Mammary epithelial cell (primary cell): ENCODE measurements at regions of chr1 and their contacts with region 1.

Region 1: GRCh38 chr1:13662493-13662892 is 37.5 kb upstream of the PRDM2 start:
- DNase-seq: no peak
- H3K4me3 ChIP-seq: no peak overlapping the region
- H3K27ac ChIP-seq: no peak overlapping the region
- H3K4me1 ChIP-seq: peaks cover 3% of the 10 kb centered on the region
- H3K27me3 ChIP-seq: no peaks in the 10 kb centered on the region
- CTCF ChIP-seq: no peak

Region 2: GRCh38 chr1:13583966-13584791 is 78.3 kb before region 1 on chr1:
- CTCF ChIA-PET with region 1: no interaction called
- dilution Hi-C with region 1: no loop called
- in situ Hi-C with region 1: no loop called
- intact Hi-C with region 1: loop called (anchors 5 kb)
- DNase-seq: peak; percentile 29
- H3K4me3 ChIP-seq: peak overlapping the region; percentile 52 to 55 (median 53)
- H3K27ac ChIP-seq: peak overlapping the region; percentile 29
- H3K4me1 ChIP-seq: peaks cover 7% of the 10 kb centered on the region
- H3K27me3 ChIP-seq: no peaks in the 10 kb centered on the region
- CTCF ChIP-seq: no peak

Region 3: GRCh38 chr1:13725714-13726175 is 63.3 kb after region 1 on chr1:
- CTCF ChIA-PET with region 1: interaction called, 3 read pairs
- dilution Hi-C with region 1: no loop called
- in situ Hi-C with region 1: no loop called
- intact Hi-C with region 1: loop called (anchors 1 kb)
- DNase-seq: peak; percentile 34
- H3K4me3 ChIP-seq: no peak overlapping the region
- H3K27ac ChIP-seq: no peak overlapping the region
- H3K4me1 ChIP-seq: no peaks in the 10 kb centered on the region
- H3K27me3 ChIP-seq: no peaks in the 10 kb centered on the region
- CTCF ChIP-seq: peak; percentile 58 to 75

Region 4: DNA sequence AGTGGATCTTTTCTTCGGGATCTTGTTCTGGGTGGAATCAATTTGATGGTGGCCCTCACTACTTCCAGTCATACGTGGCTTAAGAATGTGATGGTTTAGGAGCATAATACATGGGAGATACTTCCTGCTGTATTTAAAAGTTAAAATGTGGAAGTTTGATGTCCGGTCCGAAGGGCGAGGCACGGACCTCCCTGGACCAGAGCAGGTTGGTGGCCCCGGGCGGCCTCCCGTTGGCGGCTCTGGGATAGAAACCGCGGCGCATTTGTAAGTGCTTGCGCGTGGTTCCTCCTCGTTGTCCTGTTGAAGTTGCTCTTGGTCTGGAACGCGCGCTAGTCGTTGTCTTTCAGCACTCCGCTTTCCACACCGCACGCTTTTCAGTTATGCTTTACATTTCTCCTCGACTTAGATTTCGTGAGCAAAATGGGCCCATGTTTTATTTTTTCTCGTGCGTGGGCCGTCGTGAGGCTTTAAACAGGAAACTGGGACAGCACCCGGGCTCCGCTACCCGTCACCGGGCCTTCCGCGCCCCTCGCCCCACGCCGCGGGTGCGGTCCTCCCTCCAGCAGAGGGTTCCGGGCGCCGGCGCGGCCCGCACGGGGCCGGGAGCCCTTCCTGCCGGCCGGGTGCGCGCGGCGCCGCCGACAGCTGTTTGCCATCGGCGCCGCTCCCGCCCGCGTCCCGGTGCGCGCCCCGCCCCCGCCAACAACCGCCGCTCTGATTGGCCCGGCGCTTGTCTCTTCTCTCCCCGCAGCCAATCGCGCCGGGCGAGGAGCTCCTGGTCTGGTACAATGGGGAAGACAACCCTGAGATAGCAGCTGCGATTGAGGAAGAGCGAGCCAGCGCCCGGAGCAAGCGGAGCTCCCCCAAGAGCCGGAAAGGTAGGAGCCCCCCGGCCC is 86.4 kb after region 1 on chr1:
- CTCF ChIA-PET with region 1: no interaction called
- dilution Hi-C with region 1: no loop called
- in situ Hi-C with region 1: no loop called
- intact Hi-C with region 1: loop called (anchors 2 kb)
- DNase-seq: peak; percentile 96
- H3K4me3 ChIP-seq: peak overlapping the region; percentile 62 to 96 (median 77)
- H3K27ac ChIP-seq: peak overlapping the region; percentile 61
- H3K4me1 ChIP-seq: peaks cover 6% of the 10 kb centered on the region
- H3K27me3 ChIP-seq: no peaks in the 10 kb centered on the region
- CTCF ChIP-seq: peak in 1 of 2 donors; percentile 10

Region 5: DNA sequence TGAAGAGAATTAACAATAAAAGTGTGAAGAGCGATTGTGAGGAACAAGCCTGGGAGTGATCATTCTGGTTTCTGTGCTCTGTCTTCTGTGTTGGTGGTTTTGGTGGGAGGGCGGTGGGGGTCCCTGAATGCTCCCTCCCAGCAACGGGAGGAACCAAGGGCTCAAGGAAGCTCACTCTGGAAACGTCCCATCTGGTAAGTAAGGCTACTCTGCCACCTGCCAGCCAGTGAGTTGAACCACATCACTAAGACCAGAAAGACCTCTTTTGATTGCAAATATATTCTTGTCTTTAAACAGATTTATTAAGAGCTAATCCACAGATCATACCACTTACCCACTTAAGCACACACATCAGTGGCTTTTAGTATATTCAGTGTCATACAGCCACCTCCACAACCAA is 162.5 kb after region 1 on chr1:
- CTCF ChIA-PET with region 1: no interaction called
- dilution Hi-C with region 1: no loop called
- in situ Hi-C with region 1: no loop called
- intact Hi-C with region 1: loop called (anchors 1 kb)
- DNase-seq: no peak
- H3K4me3 ChIP-seq: no peak overlapping the region
- H3K27ac ChIP-seq: no peak overlapping the region
- H3K4me1 ChIP-seq: no peaks in the 10 kb centered on the region
- H3K27me3 ChIP-seq: no peaks in the 10 kb centered on the region
- CTCF ChIP-seq: peak in 1 of 2 donors; percentile 24

Region 6: DNA sequence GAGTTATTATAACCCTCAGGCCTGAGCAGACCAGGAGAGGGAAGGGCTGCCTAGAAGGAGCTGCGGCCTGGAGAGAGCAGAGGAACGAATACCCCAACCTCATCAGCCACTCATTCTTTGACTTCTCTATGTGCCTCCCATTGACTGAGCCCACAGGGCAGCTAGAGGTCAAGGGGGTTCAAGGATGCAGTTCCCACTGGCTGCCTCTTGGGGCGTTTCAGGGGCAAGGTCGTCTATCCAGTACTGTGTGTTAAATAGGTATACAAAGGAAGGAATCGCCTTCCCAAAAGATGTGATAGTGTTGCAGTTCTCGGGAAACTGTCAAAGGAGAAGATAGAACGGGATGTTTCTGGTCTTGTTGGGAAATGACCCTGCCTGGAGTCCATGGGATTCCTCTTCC is 288.1 kb after region 1 on chr1:
- CTCF ChIA-PET with region 1: no interaction called
- dilution Hi-C with region 1: no loop called
- in situ Hi-C with region 1: loop called (anchors 5 to 10 kb)
- intact Hi-C with region 1: no loop called
- DNase-seq: no peak
- H3K4me3 ChIP-seq: no peak overlapping the region
- H3K27ac ChIP-seq: no peak overlapping the region
- H3K4me1 ChIP-seq: no peaks in the 10 kb centered on the region
- H3K27me3 ChIP-seq: no peaks in the 10 kb centered on the region
- CTCF ChIP-seq: no peak

Region 7: DNA sequence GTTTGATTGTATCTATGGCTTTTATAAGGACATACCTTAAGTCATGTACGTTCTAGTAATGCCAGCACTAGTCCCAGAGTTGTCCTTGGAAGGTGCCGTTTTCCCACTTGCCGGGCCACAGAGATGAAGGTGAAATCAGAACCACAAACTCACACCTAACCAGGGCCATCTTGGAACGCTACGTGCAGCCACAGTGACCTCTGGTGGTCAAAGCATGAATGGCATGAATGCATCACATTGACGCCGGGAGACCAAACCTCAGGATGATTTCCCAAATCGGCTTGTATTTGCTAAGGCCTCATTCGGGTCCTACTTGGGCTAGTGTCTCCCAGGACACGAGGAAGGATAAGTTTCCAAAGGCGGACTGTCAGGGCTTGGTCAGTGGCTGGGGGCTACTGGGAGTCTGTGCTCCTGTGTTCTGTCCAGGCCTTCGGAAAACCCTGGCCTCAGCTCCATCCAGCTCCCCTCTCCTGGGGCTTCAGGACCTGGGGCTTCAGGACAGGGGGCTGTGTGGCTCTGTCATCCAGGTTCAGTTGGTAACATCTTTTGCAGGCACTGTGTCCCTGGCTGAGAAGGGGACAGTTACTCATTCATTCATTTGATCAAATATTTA is 298.0 kb after region 1 on chr1:
- CTCF ChIA-PET with region 1: no interaction called
- dilution Hi-C with region 1: no loop called
- in situ Hi-C with region 1: loop called (anchors 5 to 10 kb)
- intact Hi-C with region 1: loop called (anchors 1 kb)
- DNase-seq: peak; percentile 41
- H3K4me3 ChIP-seq: no peak overlapping the region
- H3K27ac ChIP-seq: no peak overlapping the region
- H3K4me1 ChIP-seq: no peaks in the 10 kb centered on the region
- H3K27me3 ChIP-seq: no peaks in the 10 kb centered on the region
- CTCF ChIP-seq: peak; percentile 95 to 99

Region 8: GRCh38 chr1:14672005-14672404 is 1009.5 kb after region 1 on chr1:
- CTCF ChIA-PET with region 1: no interaction called
- dilution Hi-C with region 1: no loop called
- in situ Hi-C with region 1: no loop called
- intact Hi-C with region 1: no loop called
- DNase-seq: no peak
- H3K4me3 ChIP-seq: no peak overlapping the region
- H3K27ac ChIP-seq: no peak overlapping the region
- H3K4me1 ChIP-seq: no peaks in the 10 kb centered on the region
- H3K27me3 ChIP-seq: no peaks in the 10 kb centered on the region
- CTCF ChIP-seq: no peak